Mammary epithelial cell (primary cell): ENCODE measurements at regions of chr19 and their contacts with region 1.

Region 1: DNA sequence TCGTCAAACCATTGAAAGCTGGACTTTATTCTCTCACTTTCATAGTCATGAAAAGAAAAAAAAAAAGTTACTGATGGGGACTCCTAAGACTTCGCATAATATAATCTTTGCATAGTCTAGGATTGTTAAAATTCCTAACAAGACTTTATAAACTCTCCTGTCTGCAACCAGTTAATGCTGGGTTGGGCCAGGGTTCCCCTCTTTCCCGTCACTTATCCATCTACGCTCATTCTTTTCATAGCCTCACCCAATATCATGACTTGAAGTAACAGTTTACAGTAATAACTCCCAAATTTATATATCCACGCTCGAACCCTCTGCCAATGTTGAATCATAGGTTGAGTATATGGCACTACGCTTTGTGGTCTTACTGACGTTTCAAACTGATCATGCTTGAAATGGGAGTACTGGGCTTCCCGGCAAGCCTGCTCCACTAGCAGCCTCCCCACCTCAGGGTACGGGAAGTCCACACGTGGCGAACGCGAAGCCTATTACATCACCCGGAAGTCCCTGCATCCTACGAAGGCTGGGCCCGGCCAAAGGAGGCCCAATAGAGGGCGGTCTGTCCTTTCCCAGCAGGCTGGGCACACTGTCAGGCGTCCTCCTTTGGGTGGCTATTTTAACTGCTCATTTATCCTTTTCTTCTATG is 743 bp upstream of the ZNF460 start:
- DNase-seq: peak; percentile 92
- H3K4me3 ChIP-seq: peak overlapping the region; percentile 48 to 71 (median 66)
- H3K27ac ChIP-seq: peak overlapping the region; percentile 97
- H3K4me1 ChIP-seq: peaks cover 35% of the 10 kb centered on the region
- H3K27me3 ChIP-seq: no peaks in the 10 kb centered on the region
- CTCF ChIP-seq: peak; percentile 22 to 64

Region 2: GRCh38 chr19:57103573-57104277 is 175.8 kb before region 1 on chr19:
- CTCF ChIA-PET with region 1: no interaction called
- dilution Hi-C with region 1: no loop called
- in situ Hi-C with region 1: no loop called
- intact Hi-C with region 1: loop called (anchors 5 kb)
- DNase-seq: peak; percentile 46
- H3K4me3 ChIP-seq: peak overlapping the region; percentile 11 to 25 (median 17)
- H3K27ac ChIP-seq: no peak overlapping the region
- H3K4me1 ChIP-seq: peaks cover 6% of the 10 kb centered on the region
- H3K27me3 ChIP-seq: no peaks in the 10 kb centered on the region
- CTCF ChIP-seq: peak; percentile 90 to 91

Region 3: DNA sequence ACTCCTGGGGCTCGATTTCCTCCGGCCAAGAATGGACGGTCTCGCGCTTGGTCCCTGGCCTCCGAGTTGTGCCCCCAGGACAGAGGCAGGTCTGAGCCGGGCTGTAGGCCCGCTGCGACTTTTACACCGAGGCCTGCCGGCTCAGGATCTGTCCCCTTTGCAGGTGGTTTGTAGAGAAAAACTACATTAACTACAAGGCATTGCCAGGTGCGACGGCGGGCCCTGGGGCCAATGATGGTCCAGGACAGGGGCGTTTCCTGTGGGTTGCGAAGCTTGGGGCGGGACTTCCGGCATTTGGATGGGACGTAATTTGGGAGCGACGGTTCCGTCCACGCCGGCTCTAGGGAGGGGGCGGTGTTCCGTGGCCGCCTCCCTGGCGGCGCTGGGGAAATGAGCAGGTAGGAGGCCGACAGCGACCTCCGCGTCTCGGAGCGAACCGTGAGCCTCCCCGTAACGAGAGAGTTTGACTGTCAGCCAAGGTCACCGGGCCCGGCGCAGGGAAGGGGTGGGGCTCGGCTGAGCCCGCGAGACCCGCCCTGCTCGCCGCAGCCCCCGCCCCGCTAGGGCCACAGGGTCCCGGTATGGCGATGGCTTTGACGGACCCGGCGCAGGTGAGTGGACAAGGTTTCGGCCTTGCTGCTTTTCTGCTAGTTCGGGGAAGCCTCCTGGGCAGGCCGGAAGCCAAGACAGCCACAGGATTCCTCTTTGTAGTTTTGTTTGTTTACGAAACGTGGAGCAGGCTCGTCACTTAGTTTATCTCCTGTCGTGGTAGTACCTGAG is 39.0 kb before region 1 on chr19 and contains the start of gene ZNF805:
- CTCF ChIA-PET with region 1: no interaction called
- dilution Hi-C with region 1: no loop called
- in situ Hi-C with region 1: no loop called
- intact Hi-C with region 1: loop called (anchors 1 kb)
- DNase-seq: peak; percentile 92
- H3K4me3 ChIP-seq: peak within 1 kb of the TSS; percentile 62 to 94 (median 81)
- H3K27ac ChIP-seq: peak within 1 kb of the TSS; percentile 87
- H3K4me1 ChIP-seq: peaks cover 15% of the 10 kb centered on the region
- H3K27me3 ChIP-seq: no peaks in the 10 kb centered on the region
- CTCF ChIP-seq: peak in 1 of 2 donors; percentile 3
- total RNA-seq, gene ZNF805: 13.5 to 37.5 TPM

Region 4: DNA sequence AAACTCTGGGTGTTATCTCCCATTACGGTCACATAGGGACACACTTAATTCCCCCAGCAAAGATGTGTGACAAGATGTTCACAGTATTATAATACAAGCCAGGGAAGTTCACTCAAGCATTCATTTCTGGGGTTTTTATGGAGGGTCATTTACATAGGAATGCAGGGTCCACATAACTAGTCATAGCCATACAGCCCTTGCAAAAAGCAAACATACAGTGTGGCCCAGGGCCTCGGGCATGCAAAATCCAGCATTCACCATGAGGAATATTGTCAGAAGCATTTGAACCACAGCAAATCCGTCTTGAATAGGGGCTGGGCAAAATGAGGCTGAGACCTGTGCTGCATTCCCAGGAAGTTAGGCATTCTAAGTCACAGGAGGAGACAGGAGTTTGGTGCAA is 12.3 kb before region 1 on chr19:
- CTCF ChIA-PET with region 1: no interaction called
- dilution Hi-C with region 1: no loop called
- in situ Hi-C with region 1: no loop called
- intact Hi-C with region 1: no loop called
- DNase-seq: no peak
- H3K4me3 ChIP-seq: no peak overlapping the region
- H3K27ac ChIP-seq: no peak overlapping the region
- H3K4me1 ChIP-seq: peaks cover 3% of the 10 kb centered on the region
- H3K27me3 ChIP-seq: no peaks in the 10 kb centered on the region
- CTCF ChIP-seq: no peak

Region 5: DNA sequence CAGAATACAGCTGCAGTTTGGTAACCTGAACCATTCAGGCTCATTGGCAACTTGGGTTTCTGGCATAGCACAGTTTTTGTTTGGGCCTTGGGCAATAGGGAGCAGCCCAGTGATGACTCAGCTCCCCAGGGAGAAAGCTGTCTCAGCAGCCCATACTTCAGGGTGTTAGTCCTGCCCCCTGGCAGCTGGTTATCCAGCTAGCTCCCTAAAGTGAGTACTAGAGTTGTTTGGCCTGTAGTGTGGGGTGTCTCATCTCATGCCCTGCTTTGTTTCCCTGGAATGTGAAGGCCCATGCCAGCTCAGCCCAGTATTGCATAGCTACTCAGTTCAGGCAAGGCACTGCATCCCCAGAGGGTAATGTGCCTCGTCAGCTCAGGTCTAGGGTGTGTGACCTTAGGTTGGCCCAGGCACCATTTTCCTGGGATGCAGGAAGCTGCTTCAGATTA is 22.5 kb after region 1 on chr19:
- CTCF ChIA-PET with region 1: no interaction called
- dilution Hi-C with region 1: no loop called
- in situ Hi-C with region 1: no loop called
- intact Hi-C with region 1: loop called (anchors 1 kb)
- DNase-seq: peak; percentile 99
- H3K4me3 ChIP-seq: no peak overlapping the region
- H3K27ac ChIP-seq: peak overlapping the region; percentile 87
- H3K4me1 ChIP-seq: peaks cover 41% of the 10 kb centered on the region
- H3K27me3 ChIP-seq: no peaks in the 10 kb centered on the region
- CTCF ChIP-seq: peak in 1 of 2 donors; percentile 24

Region 6: DNA sequence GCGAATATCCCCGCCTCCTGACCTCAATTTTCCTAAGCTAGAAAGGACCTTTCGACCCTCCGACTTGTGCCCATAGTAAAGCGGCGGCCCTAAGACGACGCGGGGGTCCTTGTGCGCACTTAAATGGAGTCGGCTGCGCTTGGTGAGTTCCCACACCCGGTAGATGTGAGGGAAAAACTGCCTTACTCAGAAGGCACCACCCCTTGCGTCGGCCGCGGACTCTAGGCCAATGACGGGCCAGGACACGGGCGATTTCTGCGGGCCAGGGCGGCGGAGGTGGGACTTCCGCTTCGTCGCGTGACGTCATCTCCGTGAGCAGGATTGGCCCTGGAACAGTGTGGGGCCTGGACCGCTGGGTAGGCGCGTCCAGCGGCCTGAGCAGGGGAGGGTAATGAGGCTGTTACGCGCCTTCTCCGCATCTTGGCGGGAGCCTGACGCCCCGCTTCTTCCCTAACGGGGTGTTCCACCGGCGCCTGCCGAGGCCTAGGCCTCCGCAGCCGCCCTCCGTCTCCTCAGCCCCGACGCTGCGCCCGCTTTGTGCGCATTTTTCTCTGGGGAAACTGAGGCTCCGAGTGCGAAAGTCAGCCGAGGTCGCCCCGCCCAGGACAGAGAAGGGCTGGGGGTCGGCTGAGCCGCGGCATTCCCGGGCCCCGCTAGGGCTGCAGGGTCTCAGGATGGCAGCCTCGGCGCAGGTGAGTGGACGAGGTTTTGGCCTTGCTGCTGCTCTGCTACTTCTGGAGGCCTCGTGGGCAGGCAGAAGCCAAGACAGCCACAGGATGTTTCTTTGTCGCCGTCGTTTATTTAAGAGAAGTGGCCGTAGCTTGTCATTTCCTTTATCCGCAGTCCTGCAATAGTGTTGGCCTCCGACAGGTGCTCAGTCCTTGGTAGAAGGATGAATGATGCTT is 40.9 kb after region 1 on chr19 and contains the start of gene ZNF543:
- CTCF ChIA-PET with region 1: no interaction called
- dilution Hi-C with region 1: no loop called
- in situ Hi-C with region 1: no loop called
- intact Hi-C with region 1: loop called (anchors 2 kb)
- DNase-seq: peak; percentile 96
- H3K4me3 ChIP-seq: peak within 1 kb of the TSS; percentile 81 to 96 (median 90)
- H3K27ac ChIP-seq: peak within 1 kb of the TSS; percentile 72
- H3K4me1 ChIP-seq: peaks cover 14% of the 10 kb centered on the region
- H3K27me3 ChIP-seq: no peaks in the 10 kb centered on the region
- CTCF ChIP-seq: peak in 1 of 2 donors; percentile 4
- total RNA-seq, gene ZNF543: 7.4 to 15.2 TPM

Region 7: DNA sequence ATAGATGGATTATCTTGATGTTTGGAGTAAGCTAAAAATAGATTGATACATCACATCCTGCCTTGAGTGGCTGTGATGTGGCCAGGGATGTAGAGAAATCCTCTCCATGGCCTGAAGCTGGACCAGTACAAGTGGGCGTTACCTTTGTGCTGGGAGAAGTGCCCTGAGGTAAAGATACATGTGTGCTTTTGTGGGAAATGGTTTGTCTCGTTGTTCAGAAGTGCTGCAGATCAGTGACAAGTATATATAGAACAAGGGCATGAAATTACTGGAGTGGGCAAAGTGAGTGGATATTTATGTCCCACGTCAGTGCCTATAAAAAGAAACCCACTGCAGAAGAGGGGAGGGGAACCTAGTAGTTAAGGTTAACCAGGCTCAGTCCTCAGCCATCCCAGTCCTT is 59.3 kb after region 1 on chr19:
- CTCF ChIA-PET with region 1: no interaction called
- dilution Hi-C with region 1: no loop called
- in situ Hi-C with region 1: no loop called
- intact Hi-C with region 1: no loop called
- DNase-seq: no peak
- H3K4me3 ChIP-seq: no peak overlapping the region
- H3K27ac ChIP-seq: no peak overlapping the region
- H3K4me1 ChIP-seq: peaks cover 6% of the 10 kb centered on the region
- H3K27me3 ChIP-seq: no peaks in the 10 kb centered on the region
- CTCF ChIP-seq: no peak

Region 8: DNA sequence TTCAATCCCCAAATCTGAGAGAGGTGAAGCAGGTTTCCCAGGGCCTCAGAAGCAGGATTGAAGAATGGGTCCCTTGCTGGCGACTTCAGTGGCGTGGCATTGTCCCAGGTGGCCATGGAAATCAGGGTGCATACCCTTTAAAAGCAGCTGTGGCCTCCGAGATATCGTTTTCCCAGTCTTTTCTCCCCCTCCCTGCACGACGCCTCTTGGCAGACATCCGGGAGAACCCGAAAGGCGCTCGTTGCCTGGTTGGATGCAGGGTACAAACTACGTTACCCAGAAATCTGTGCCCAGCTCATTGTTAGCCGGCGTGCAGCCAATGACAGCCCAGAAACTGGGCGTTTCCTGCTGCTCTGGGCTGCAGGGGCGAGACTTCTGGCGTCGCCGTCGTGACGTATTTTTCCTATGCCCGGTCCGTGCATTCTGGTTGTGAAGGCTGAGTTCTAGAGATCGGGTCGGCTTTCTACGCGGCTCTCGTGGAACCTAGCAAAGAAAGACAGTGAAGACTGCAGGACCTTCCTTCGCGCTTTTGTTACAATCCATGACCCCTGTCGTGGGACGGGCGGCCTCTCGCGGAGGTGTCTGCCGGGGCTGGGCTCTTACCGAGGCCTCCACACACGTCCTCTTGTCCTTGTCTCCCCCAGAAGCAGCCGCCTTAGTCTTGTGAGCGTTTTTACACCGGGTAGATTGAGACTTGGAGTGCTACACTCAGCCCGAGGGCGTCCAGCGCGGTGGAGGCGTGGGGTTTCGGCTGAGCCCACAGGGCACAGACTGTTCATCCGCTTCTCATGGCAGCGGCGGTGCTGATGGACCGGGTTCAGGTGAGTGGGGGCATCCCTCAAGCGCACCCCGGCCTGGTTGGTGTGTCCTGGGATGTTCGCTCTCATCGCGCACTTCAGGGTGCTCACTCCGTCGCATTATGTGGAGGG is 71.6 kb after region 1 on chr19 and contains the start of gene ZNF304:
- CTCF ChIA-PET with region 1: no interaction called
- dilution Hi-C with region 1: no loop called
- in situ Hi-C with region 1: no loop called
- intact Hi-C with region 1: loop called (anchors 1 kb)
- DNase-seq: peak; percentile 96
- H3K4me3 ChIP-seq: peak within 1 kb of the TSS; percentile 78 to 98 (median 96)
- H3K27ac ChIP-seq: peak within 1 kb of the TSS; percentile 83
- H3K4me1 ChIP-seq: peaks cover 8% of the 10 kb centered on the region
- H3K27me3 ChIP-seq: no peaks in the 10 kb centered on the region
- CTCF ChIP-seq: peak in 1 of 2 donors; percentile 7
- total RNA-seq, gene ZNF304: 8.0 to 16.5 TPM